ENCODE measurements at regions of chr4 and their contacts with region 1.

Region 1: GRCh38 chr4:174365018-174365587 is 81.4 kb downstream of the CEP44 start:
- DNase-seq: peak; percentile 26
- ATAC-seq: no peak
- H3K4me3 ChIP-seq: no peak overlapping the region
- H3K27ac ChIP-seq: no peak overlapping the region
- H3K4me1 ChIP-seq: no peaks in the 10 kb centered on the region
- H3K27me3 ChIP-seq: no peaks in the 10 kb centered on the region
- CTCF ChIP-seq: peak; percentile 24 to 72 (median 61); a peak in 5 of 6 replicates
- POLR2A ChIP-seq: no peak
- RAD21 ChIP-seq: peak; percentile 76

Region 2: DNA sequence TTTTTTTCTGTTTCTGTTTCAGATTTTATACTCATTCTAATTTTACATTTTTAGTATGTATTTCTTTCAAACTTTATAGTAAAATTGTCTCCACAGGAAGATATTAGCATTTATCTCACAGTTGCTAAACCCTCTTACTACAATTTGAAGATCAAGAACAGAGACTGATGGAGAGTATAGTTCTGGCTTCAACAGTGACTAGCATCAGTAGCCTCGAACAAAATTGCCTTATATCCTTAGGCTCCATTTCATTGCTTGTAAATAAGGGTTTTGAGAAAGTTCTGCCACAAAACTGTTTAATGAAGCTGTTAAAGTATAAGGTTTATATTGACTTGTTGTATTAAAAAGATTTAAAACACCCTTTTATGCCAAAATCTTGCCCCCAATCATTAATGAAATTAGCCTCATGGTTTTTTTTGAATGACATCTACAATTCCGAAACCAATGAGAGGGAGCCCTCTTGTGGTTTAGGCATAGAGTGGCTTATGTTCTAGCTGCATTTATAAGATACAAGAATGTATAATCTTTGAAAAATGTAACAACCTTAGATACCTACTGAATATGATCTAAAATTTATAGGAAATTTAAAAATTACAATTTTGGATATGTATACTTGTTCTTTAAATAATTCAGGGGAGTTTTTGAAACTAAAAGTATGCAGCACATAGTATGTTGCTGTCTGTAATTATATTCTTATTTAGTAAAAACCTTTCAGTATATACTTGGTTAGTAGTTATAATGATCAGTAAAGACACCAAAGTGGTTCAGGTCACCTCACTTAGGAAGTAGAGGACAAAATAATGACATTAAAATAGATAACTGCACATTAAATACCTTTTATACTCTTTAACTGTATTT is 267.0 kb after region 1 on chr4:
- CTCF ChIA-PET with region 1: interaction called, 8 read pairs
- POLR2A ChIA-PET with region 1: no interaction called
- RAD21 ChIA-PET with region 1: no interaction called
- intact Hi-C with region 1: loop called (anchors 1 kb)
- DNase-seq: peak; percentile 24
- ATAC-seq: peak; percentile 85
- H3K4me3 ChIP-seq: no peak overlapping the region
- H3K27ac ChIP-seq: no peak overlapping the region
- H3K4me1 ChIP-seq: no peaks in the 10 kb centered on the region
- H3K27me3 ChIP-seq: no peaks in the 10 kb centered on the region
- CTCF ChIP-seq: peak; percentile 67 to 76 (median 73)
- POLR2A ChIP-seq: no peak
- RAD21 ChIP-seq: peak; percentile 80

Region 3: GRCh38 chr4:174714393-174715211 is 349.5 kb after region 1 on chr4:
- CTCF ChIA-PET with region 1: no interaction called
- POLR2A ChIA-PET with region 1: no interaction called
- RAD21 ChIA-PET with region 1: no interaction called
- intact Hi-C with region 1: loop called (anchors 1 kb)
- DNase-seq: peak; percentile 59
- ATAC-seq: peak; percentile 97
- H3K4me3 ChIP-seq: no peak overlapping the region
- H3K27ac ChIP-seq: no peak overlapping the region
- H3K4me1 ChIP-seq: no peaks in the 10 kb centered on the region
- H3K27me3 ChIP-seq: no peaks in the 10 kb centered on the region
- CTCF ChIP-seq: peak; percentile 52 to 87 (median 79); a peak in 5 of 6 replicates
- POLR2A ChIP-seq: no peak
- RAD21 ChIP-seq: peak; percentile 67

Region 4: GRCh38 chr4:175253184-175253902 is 888.2 kb after region 1 on chr4:
- CTCF ChIA-PET with region 1: no interaction called
- POLR2A ChIA-PET with region 1: no interaction called
- RAD21 ChIA-PET with region 1: no interaction called
- intact Hi-C with region 1: loop called (anchors 5 kb)
- DNase-seq: peak; percentile 19
- ATAC-seq: peak; percentile 74
- H3K4me3 ChIP-seq: no peak overlapping the region
- H3K27ac ChIP-seq: no peak overlapping the region
- H3K4me1 ChIP-seq: no peaks in the 10 kb centered on the region
- H3K27me3 ChIP-seq: no peaks in the 10 kb centered on the region
- CTCF ChIP-seq: peak; percentile 43 to 66 (median 46); a peak in 5 of 6 replicates
- POLR2A ChIP-seq: no peak
- RAD21 ChIP-seq: peak; percentile 71

Region 5: GRCh38 chr4:175536852-175537453 is 1171.8 kb after region 1 on chr4:
- CTCF ChIA-PET with region 1: no interaction called
- POLR2A ChIA-PET with region 1: no interaction called
- RAD21 ChIA-PET with region 1: no interaction called
- intact Hi-C with region 1: loop called (anchors 2 kb)
- DNase-seq: peak; percentile 72
- ATAC-seq: peak; percentile 68
- H3K4me3 ChIP-seq: no peak overlapping the region
- H3K27ac ChIP-seq: no peak overlapping the region
- H3K4me1 ChIP-seq: peaks cover 13 to 15% of the 10 kb centered on the region in 2 experiments; a peak in 3 of 4 replicates
- H3K27me3 ChIP-seq: no peaks in the 10 kb centered on the region
- CTCF ChIP-seq: peak; percentile 38 to 55 (median 50); a peak in 4 of 6 replicates
- POLR2A ChIP-seq: no peak
- RAD21 ChIP-seq: peak; percentile 78

Region 6: GRCh38 chr4:175891851-175892250 is 1526.7 kb after region 1 on chr4:
- CTCF ChIA-PET with region 1: no interaction called
- POLR2A ChIA-PET with region 1: no interaction called
- RAD21 ChIA-PET with region 1: no interaction called
- intact Hi-C with region 1: loop called (anchors 10 kb)
- DNase-seq: peak; percentile 38
- ATAC-seq: peak; percentile 78
- H3K4me3 ChIP-seq: no peak overlapping the region
- H3K27ac ChIP-seq: no peak overlapping the region
- H3K4me1 ChIP-seq: no peaks in the 10 kb centered on the region
- H3K27me3 ChIP-seq: no peaks in the 10 kb centered on the region
- CTCF ChIP-seq: peak; percentile 27 to 49 (median 47); a peak in 4 of 6 replicates
- POLR2A ChIP-seq: no peak
- RAD21 ChIP-seq: peak; percentile 63